Right ventricle myocardium inferior (tissue), 1 donor: ENCODE measurements at regions of chr17 and their contacts with region 1.

Region 1: DNA sequence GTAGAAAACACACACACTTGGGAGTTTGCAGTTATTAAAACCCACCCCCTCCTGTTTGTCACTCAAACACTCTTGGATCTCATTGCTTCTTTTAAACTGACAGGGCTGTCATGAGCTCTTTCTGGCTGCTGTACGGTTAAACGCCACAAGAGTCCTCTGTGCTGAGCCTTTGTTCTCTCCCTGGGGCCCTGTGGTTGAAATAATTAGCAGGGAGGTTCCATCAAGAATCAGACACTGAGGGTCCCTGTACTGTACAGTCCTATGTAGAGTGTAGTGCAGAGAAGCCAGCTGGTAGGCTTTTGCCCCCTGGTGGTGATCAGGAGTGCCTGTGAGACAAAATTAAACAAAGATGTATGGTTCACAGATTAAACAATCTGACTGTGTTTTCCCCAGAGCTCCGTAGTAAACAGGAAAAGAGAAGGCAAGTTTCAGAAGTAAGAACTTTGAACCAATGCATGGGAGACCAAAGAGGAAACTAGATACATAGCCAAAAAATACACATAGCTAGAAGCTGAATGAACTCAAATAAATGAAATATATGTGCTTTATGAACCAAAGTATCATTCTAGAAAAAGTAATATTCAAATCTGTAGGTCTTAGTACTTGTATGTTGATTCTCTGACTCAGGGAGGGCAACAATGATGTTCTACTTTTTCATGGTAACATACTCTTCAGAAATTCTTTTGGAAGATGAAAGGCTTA is 1.4 kb upstream of the SSH2 start:
- DNase-seq: no peak
- ATAC-seq: peak; percentile 79

Region 2: GRCh38 chr17:29579866-29580771 is 351.3 kb before region 1 on chr17:
- intact Hi-C with region 1: loop called (anchors 5 kb)
- DNase-seq: peak; percentile 91
- ATAC-seq: peak; percentile 83

Region 3: GRCh38 chr17:29617125-29617480 is 314.3 kb before region 1 on chr17:
- intact Hi-C with region 1: loop called (anchors 10 kb)
- DNase-seq: peak; percentile 89
- ATAC-seq: no peak

Region 4: GRCh38 chr17:29807520-29808351 is 123.6 kb before region 1 on chr17:
- intact Hi-C with region 1: loop called (anchors 1 kb)
- DNase-seq: peak; percentile 73
- ATAC-seq: peak; percentile 72

Region 5: GRCh38 chr17:29867643-29868181 is 63.7 kb before region 1 on chr17:
- intact Hi-C with region 1: loop called (anchors 10 kb)
- DNase-seq: no peak
- ATAC-seq: no peak

Region 6: GRCh38 chr17:29954405-29954804 is 23.0 kb after region 1 on chr17:
- intact Hi-C with region 1: no loop called
- DNase-seq: no peak
- ATAC-seq: no peak